ENCODE measurements at regions of chr5 and their contacts with region 1.

Region 1: DNA sequence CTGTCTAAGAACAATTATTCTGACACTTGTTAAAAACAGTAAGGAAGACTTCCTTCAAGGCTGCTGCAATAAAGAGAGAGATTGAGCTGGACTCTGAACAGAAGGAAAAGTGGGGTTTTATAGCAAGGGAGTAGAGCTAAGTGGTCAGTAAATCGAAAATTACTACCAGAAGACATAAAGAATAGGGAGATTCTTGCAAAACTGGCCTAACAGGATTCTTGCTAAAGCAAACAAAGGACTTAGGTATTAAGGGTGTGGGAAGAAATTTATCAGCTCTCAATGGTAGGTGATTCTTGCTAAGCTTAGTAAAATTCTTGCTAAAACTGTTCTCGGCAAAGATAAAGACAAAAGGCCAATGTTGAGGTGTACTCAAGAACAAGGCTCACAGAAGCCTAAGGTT is 300.5 kb downstream of the SLCO4C1 start:
- DNase-seq: peak; percentile 8
- H3K4me3 ChIP-seq: no peak overlapping the region
- H3K27ac ChIP-seq: no peak overlapping the region
- H3K4me1 ChIP-seq: no peaks in the 10 kb centered on the region
- H3K27me3 ChIP-seq: no peaks in the 10 kb centered on the region
- CTCF ChIP-seq: no peak

Region 2: DNA sequence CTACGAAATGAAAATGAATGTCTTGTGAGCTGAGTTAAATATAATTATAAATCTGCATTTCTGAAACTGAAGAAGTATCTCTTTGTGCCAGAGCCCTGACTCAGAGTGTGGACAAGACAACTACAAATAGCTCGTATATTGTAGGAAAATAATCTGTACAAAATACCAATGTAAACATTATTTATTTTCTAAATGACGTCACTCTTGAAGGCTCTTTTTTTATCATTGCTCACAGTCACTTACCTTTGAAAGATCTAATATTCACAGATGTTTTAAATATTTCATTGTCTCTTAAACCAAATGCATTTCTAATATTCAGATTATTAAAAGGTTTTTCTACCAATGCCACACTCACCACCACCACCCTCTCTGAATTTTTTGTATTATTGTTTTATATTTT is 74.4 kb after region 1 on chr5:
- CTCF ChIA-PET with region 1: no interaction called
- dilution Hi-C with region 1: loop called (anchors 10 kb)
- in situ Hi-C with region 1: no loop called
- intact Hi-C with region 1: no loop called
- DNase-seq: no peak
- H3K4me3 ChIP-seq: no peak overlapping the region
- H3K27ac ChIP-seq: no peak overlapping the region
- H3K4me1 ChIP-seq: no peaks in the 10 kb centered on the region
- H3K27me3 ChIP-seq: no peaks in the 10 kb centered on the region
- CTCF ChIP-seq: no peak